Mammary epithelial cell (primary cell): ENCODE measurements at regions of chr11 and their contacts with region 1.

Region 1: DNA sequence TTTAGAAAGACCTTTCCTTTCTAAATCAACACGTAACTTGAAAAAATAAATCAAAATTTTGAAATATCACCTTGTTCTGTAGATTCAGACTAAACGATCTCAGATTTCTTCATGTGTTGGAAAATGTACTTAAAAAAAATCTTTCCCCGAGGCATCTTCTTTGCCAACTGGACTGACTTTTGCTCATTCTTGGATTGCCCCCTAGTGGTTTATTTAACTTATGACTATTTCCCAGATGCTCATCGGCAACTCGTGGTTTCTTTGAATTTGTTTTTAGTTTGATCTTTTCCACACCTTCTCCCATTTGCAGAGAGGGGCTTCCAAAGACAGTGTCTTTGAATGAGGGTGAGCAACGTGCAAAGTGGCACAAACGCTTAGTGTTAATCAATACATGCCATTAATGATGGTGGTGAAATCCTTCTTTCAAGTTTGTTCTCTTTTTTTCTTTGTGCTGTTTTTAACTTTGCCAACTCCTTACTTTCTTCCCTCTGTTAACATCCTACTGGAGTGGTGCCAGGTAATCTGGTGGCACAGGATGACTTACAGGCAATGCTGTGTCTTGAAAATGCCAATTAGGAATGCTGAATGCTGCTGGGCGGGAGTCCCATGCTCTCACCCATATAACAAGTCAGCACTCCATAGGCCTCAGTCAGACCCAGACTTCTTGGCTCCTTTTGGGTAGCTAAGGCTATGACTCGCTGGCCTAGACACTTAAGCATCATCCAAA is 18.3 kb downstream of the PRSS23 start:
- DNase-seq: peak; percentile 50
- H3K4me3 ChIP-seq: no peak overlapping the region
- H3K27ac ChIP-seq: no peak overlapping the region
- H3K4me1 ChIP-seq: peaks cover 39% of the 10 kb centered on the region
- H3K27me3 ChIP-seq: no peaks in the 10 kb centered on the region
- CTCF ChIP-seq: peak; percentile 59 to 60

Region 2: DNA sequence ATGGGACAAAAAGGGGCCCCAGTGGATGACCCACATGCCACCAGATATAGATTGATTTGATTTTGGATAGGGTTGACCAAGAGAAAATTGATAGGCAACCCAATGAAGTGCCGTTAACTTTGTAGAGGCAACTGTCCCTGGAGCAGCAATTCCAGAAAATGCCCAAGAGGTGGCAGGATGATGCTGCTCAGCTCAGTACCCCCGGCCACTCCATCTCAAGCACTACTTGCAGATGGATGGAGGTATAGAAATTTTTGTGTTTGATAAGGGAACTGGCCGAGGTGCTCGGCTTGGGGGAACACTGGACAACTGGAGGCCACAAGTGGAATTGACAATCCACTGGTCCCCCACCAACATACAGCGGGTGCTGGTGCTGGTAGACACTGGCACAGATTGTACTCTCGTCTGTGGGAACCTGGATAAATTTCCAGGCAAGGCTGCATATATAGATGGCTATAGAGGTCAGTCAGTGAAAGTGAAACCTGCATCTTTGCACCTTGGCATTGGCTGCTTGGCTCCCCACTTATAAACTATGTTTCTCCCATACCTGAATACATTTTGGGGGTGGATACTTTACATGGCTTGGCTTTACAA is 877.2 kb before region 1 on chr11:
- CTCF ChIA-PET with region 1: no interaction called
- dilution Hi-C with region 1: no loop called
- in situ Hi-C with region 1: no loop called
- intact Hi-C with region 1: no loop called
- DNase-seq: peak; percentile 46
- H3K4me3 ChIP-seq: no peak overlapping the region
- H3K27ac ChIP-seq: no peak overlapping the region
- H3K4me1 ChIP-seq: peaks cover 4% of the 10 kb centered on the region
- H3K27me3 ChIP-seq: no peaks in the 10 kb centered on the region
- CTCF ChIP-seq: peak; percentile 57 to 78

Region 3: GRCh38 chr11:86360775-86361395 is 457.7 kb before region 1 on chr11:
- CTCF ChIA-PET with region 1: no interaction called
- dilution Hi-C with region 1: no loop called
- in situ Hi-C with region 1: no loop called
- intact Hi-C with region 1: loop called (anchors 1 kb)
- DNase-seq: peak; percentile 31
- H3K4me3 ChIP-seq: no peak overlapping the region
- H3K27ac ChIP-seq: no peak overlapping the region
- H3K4me1 ChIP-seq: no peaks in the 10 kb centered on the region
- H3K27me3 ChIP-seq: no peaks in the 10 kb centered on the region
- CTCF ChIP-seq: peak; percentile 33 to 64

Region 4: GRCh38 chr11:86620891-86621521 is 197.6 kb before region 1 on chr11:
- CTCF ChIA-PET with region 1: interaction called, 3 read pairs
- dilution Hi-C with region 1: no loop called
- in situ Hi-C with region 1: loop called in 1 of 2 experiments (anchors 25 kb)
- intact Hi-C with region 1: loop called (anchors 5 kb)
- DNase-seq: no peak
- H3K4me3 ChIP-seq: no peak overlapping the region
- H3K27ac ChIP-seq: no peak overlapping the region
- H3K4me1 ChIP-seq: peaks cover 14% of the 10 kb centered on the region
- H3K27me3 ChIP-seq: no peaks in the 10 kb centered on the region
- CTCF ChIP-seq: no peak

Region 5: DNA sequence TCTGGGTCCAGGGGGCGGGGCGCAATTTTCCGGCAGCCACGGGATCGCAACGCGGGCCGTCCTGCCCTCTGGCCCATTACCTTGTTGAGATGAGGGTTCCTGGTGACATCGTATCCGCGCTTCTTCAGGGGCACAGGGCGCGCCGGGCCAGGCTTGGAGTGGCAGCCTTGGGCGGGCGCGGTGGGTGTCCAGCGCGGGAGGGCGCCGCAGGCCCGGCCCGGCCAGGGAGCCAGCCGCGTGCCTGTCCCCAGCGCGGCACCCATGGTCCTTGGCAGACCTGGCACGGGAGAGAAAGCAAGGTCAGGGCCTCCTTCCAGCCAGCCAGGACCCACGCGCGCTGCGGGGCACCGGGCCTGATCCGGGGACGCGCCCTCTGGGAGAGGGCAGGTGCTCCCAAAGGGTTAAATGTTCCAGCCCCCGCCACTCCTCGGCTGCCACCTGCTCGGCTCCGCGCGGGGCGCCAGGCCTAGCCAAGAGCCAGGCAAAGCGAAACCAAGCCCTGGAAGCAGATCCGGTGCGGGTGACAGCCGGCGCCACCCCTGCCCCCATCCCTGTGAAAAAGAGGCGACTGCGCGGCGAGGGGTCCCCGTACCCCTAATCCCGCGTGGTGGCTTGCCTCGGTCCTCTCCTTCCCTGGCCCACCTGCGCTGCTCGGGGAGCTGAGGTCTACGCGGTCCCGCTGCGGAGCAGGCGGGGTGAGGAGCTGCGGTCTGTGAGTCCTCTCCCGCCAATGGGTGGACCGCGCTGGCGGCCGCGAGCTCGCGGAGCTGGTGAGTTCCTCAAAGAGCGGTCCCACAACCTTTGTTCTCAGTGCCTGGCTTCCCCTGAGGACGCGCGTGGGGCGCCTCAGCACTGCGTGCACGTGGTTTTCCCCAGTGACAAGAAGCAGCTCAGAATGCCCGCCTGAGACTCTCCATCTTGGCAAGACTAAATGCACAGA is 146.7 kb before region 1 on chr11 and contains the start of gene ME3:
- CTCF ChIA-PET with region 1: no interaction called
- dilution Hi-C with region 1: no loop called
- in situ Hi-C with region 1: no loop called
- intact Hi-C with region 1: loop called (anchors 5 kb)
- DNase-seq: no peak
- H3K4me3 ChIP-seq: peak within 1 kb of the TSS; percentile 28 to 56 (median 52)
- H3K27ac ChIP-seq: peak within 1 kb of the TSS; percentile 14
- H3K4me1 ChIP-seq: peaks cover 28% of the 10 kb centered on the region
- H3K27me3 ChIP-seq: no peaks in the 10 kb centered on the region
- CTCF ChIP-seq: no peak
- total RNA-seq, gene ME3: 11.2 TPM in 1 of 2 donors, not detected in the other